ENCODE measurements at regions of chr22 and their contacts with region 1.

Region 1: DNA sequence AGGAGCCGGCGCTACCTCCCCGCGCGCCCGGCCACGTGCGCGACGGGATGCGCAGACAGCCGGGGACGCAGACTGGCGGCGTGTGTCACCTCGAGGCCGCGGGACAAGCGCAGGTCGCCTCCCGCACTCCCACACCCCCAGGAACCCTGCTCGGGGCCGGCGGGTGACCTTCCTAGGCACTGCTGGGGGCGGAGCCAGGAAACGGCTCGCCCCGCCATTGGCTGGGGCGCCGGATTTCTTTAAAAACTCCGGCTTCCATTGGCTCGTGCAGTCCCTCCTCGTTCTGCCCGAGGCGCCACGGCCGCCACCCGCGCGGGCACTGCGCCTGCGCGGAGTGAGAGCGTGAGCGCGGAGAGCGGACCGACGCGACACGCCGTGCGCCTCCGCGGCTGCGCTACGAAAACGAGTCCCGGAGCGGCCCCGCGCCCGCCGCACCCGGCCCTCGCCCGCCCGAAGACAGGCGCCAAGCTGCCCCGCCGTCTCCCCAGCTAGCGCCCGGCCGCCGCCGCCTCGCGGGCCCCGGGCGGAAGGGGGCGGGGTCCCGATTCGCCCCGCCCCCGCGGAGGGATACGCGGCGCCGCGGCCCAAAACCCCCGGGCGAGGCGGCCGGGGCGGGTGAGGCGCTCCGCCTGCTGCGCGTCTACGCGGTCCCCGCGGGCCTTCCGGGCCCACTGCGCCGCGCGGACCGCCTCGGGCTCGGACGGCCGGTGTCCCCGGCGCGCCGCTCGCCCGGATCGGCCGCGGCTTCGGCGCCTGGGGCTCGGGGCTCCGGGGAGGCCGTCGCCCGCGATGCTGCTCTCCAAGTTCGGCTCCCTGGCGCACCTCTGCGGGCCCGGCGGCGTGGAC is at the start of gene PIM3:
- DNase-seq: peak; percentile 94
- ATAC-seq: peak; percentile 79
- H3K4me3 Mint-ChIP-seq: peak within 1 kb of the TSS; percentile 93
- H3K27ac Mint-ChIP-seq: peak within 1 kb of the TSS; percentile 93
- H3K4me1 Mint-ChIP-seq: peaks cover 25% of the 10 kb centered on the region
- H3K27me3 Mint-ChIP-seq: no peaks in the 10 kb centered on the region
- total RNA-seq, gene PIM3: 127 to 165 TPM

Region 2: GRCh38 chr22:49767355-49768062 is 192.9 kb before region 1 on chr22:
- CTCF ChIA-PET with region 1: no interaction called
- POLR2A ChIA-PET with region 1: no interaction called
- intact Hi-C with region 1: no loop called
- DNase-seq: peak; percentile 51
- ATAC-seq: peak; percentile 68
- H3K4me3 Mint-ChIP-seq: no peak overlapping the region
- H3K27ac Mint-ChIP-seq: no peak overlapping the region
- H3K4me1 Mint-ChIP-seq: peaks cover 8% of the 10 kb centered on the region
- H3K27me3 Mint-ChIP-seq: no peaks in the 10 kb centered on the region

Region 3: GRCh38 chr22:49833350-49834007 is 126.9 kb before region 1 on chr22:
- CTCF ChIA-PET with region 1: no interaction called
- POLR2A ChIA-PET with region 1: no interaction called
- intact Hi-C with region 1: no loop called
- DNase-seq: no peak
- ATAC-seq: no peak
- H3K4me3 Mint-ChIP-seq: no peak overlapping the region
- H3K27ac Mint-ChIP-seq: no peak overlapping the region
- H3K4me1 Mint-ChIP-seq: peaks cover 28% of the 10 kb centered on the region
- H3K27me3 Mint-ChIP-seq: no peaks in the 10 kb centered on the region

Region 4: GRCh38 chr22:49917974-49918910 is 42.1 kb before region 1 on chr22 and contains the starts of genes ALG12 and CRELD2:
- CTCF ChIA-PET with region 1: no interaction called
- POLR2A ChIA-PET with region 1: interaction called, 6 read pairs
- intact Hi-C with region 1: loop called in 1 of 2 experiments (anchors 1 kb)
- DNase-seq: peak; percentile 99
- ATAC-seq: peak; percentile 99
- H3K4me3 Mint-ChIP-seq: peak within 1 kb of the TSS; percentile 79
- H3K27ac Mint-ChIP-seq: peak within 1 kb of the TSS; percentile 63
- H3K4me1 Mint-ChIP-seq: peaks cover 18% of the 10 kb centered on the region
- H3K27me3 Mint-ChIP-seq: no peaks in the 10 kb centered on the region
- total RNA-seq, gene ALG12: 13.6 to 13.7 TPM
- total RNA-seq, gene CRELD2: 15.2 to 16.4 TPM

Region 5: DNA sequence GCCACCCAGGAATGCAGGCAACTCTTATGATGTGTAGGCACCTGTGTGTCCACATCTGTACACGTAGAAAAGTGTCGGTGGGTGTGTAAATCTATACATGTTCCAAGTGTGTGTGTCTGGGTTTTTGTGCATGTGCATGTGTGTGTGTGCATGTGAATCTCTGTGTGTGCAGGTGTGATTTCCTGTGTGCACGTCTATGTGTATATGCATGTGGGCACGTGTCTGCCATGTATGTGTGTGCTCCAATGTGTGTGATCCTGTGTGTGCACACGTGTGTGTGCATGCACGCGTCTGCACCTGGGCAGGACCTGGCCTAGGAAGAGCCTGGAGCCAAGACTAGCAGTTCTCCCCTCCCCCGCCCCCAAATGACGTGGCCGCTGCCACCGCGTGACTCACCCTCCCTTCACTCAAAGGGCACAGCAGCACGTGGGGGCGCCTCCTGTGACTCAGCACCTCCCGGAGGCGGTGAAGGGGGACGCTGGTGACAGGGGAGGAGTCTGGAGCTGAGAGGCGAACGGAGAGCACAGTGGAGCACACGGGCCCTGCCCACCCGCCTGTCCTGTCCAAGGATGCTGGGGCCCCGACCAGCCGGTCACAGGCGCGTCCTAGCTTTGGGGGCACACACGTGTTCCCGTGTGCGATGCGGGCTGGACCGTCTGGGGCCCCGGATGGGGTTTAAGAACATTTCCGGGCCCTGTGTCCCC is 10.3 kb after region 1 on chr22:
- CTCF ChIA-PET with region 1: interaction called, 3 read pairs
- POLR2A ChIA-PET with region 1: interaction called, 21 read pairs
- intact Hi-C with region 1: no loop called
- DNase-seq: peak; percentile 99
- ATAC-seq: peak; percentile 87
- H3K4me3 Mint-ChIP-seq: no peak overlapping the region
- H3K27ac Mint-ChIP-seq: peak overlapping the region; percentile 93
- H3K4me1 Mint-ChIP-seq: peaks cover 38% of the 10 kb centered on the region
- H3K27me3 Mint-ChIP-seq: no peaks in the 10 kb centered on the region

Region 6: DNA sequence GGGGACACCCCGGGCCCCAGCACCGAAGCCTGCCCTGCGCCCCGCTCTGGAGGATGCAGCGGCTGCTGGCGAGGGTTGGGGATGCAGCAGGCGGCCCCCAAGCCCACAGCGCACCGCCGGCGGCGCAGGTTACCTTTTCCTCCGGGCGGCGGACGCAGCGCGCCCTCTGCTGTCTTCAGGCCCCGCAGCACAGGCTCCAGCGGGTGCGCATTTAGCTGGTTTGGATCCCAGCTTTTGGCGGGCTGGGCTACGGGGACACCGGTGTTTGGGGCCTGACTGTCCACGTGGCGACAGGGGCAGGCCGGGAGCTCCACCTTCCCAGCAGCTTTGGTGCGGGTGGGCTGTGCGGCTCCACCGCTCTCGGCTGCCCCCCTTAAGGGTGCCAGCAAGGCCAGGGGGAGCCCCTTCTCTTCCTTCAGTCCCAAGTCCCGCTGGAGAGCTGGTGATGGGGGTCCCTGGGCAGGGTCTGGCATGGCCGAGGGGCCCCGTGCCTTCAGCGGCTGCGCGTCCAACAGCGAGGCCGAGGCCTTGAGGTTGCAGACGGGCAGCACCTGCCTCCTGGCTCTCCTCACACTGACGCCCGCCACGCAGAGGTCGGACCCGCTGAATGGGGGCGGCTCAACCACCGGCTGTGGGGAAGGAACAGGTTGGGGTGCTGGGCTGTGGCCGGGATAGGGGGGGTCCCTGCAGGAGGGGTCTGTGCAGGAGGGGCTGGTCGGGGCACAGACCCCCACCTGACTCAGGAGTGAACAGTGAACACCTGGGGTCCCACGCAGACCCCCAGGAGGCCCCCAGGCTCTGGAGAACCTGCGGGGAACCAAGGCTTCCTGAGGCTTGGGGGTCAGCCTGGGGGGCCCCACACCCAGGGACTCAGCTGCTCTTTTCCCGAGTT is 70.2 kb after region 1 on chr22:
- CTCF ChIA-PET with region 1: interaction called, 4 read pairs
- POLR2A ChIA-PET with region 1: interaction called, 3 read pairs
- intact Hi-C with region 1: loop called in 1 of 2 experiments (anchors 1 kb)
- DNase-seq: peak; percentile 95
- ATAC-seq: peak; percentile 93
- H3K4me3 Mint-ChIP-seq: no peak overlapping the region
- H3K27ac Mint-ChIP-seq: no peak overlapping the region
- H3K4me1 Mint-ChIP-seq: peaks cover 22% of the 10 kb centered on the region
- H3K27me3 Mint-ChIP-seq: peaks cover 7% of the 10 kb centered on the region

Region 7: DNA sequence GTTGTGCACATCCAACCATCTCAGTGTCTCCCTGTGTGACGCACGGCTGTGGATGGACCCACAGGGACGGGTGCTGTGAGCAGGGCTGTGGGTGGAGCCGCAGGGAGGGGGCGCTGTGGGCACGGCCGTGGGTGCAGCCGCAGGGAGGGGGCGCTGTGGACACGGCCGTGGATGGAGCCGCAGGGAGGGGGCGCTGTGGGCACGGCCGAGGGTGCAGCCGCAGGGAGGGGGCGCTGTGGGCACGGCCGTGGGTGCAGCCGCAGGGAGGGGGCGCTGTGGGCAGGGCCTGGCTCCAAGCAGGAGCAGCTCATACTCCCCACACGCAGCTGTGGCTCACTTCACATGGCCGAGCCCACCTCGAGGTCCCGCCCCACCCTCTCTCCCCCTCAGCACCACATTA is 315.8 kb after region 1 on chr22:
- CTCF ChIA-PET with region 1: no interaction called
- POLR2A ChIA-PET with region 1: no interaction called
- intact Hi-C with region 1: loop called in 1 of 2 experiments (anchors 2 kb)
- DNase-seq: peak; percentile 81
- ATAC-seq: peak; percentile 70
- H3K4me3 Mint-ChIP-seq: no peak overlapping the region
- H3K27ac Mint-ChIP-seq: no peak overlapping the region
- H3K4me1 Mint-ChIP-seq: peaks cover 1% of the 10 kb centered on the region
- H3K27me3 Mint-ChIP-seq: peaks cover 2% of the 10 kb centered on the region

Region 8: DNA sequence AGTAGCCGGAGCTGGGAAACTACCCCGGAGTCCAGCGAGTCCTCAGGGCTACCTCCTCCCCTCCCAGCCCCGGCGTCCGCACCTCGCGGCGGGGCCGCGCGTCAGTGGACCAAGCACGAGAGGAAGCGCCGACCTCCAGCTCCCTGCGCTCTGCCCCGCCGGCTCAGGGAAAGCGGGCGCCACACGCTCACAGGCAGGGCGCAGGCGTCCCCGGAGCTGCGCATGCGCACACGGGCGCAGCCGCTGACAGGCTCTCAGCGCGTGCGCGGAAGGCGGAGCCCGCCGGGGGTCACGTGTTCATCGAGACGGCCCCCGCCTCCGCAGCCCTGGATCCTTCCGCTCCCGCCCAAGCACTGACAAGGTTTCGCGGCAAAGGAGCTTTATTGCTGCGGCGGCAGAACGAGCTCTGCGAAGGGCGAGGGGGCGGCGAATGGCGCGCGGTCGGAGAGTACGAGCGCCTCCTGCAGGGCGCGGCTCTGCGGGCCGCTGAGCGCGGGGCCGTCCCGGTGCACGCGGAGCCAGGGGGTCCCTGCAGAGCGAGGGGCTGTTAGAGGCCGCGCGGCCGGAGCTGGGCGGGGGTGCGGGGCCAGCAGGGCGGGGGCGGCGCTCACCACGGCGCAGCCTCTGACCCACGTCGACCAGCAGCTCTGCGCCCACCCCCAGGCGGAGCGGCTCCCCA is 565.1 kb after region 1 on chr22 and contains the start of gene SCO2:
- CTCF ChIA-PET with region 1: no interaction called
- POLR2A ChIA-PET with region 1: no interaction called
- intact Hi-C with region 1: loop called in 1 of 2 experiments (anchors 5 kb)
- DNase-seq: peak; percentile 99
- ATAC-seq: peak; percentile 56
- H3K4me3 Mint-ChIP-seq: peak within 1 kb of the TSS; percentile 77
- H3K27ac Mint-ChIP-seq: peak within 1 kb of the TSS; percentile 87
- H3K4me1 Mint-ChIP-seq: peaks cover 34% of the 10 kb centered on the region
- H3K27me3 Mint-ChIP-seq: no peaks in the 10 kb centered on the region
- total RNA-seq, gene SCO2: 2.4 to 5.6 TPM